ENCODE measurements at regions of chr5 and their contacts with region 1.

Region 1: DNA sequence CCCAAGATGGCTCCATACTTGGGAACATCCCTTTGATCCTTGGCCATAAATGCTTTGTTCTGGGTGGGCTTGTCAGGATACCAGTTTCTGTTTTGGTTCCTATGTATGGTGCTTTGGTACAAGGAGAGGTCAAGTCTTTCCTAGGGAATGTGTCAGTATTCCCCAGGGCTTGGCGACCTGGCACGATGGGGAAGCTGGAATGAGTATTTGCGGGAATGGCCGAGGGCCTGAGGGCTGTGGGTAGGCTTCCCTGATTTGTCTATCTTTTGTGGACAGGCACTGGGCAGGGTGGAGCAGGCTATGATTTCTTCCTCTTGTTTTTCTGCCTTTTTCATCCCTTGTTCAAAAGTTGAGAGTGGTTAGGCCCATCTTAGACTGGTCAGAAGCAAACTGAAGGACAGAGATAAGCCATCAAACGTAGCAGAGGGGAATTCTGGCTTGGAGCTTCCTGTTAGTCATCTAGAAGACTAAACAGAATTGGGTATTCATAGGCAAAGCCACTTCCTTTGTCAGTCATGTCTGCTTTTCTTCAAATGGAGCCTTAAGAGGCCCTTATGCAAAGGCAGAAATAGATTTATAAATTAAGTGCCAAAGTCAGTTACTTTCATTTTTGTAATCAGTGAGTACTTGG is 13.7 kb downstream of the DOCK2 start:
- DNase-seq: peak in 3 of 14 experiments; percentile 64 to 70 (median 68)
- ATAC-seq: peak; percentile 58
- H3K4me3 ChIP-seq: no peak overlapping the region
- H3K4me3 Mint-ChIP-seq: peak overlapping the region; percentile 72
- H3K27ac ChIP-seq: peak overlapping the region; percentile 17 to 73
- H3K27ac Mint-ChIP-seq: peak overlapping the region; percentile 81
- H3K4me1 ChIP-seq: peaks cover 86% of the 10 kb centered on the region
- H3K4me1 Mint-ChIP-seq: peaks cover 99% of the 10 kb centered on the region
- H3K27me3 ChIP-seq: no peaks in the 10 kb centered on the region
- H3K27me3 Mint-ChIP-seq: no peaks in the 10 kb centered on the region
- CTCF ChIP-seq: no peak

Region 2: DNA sequence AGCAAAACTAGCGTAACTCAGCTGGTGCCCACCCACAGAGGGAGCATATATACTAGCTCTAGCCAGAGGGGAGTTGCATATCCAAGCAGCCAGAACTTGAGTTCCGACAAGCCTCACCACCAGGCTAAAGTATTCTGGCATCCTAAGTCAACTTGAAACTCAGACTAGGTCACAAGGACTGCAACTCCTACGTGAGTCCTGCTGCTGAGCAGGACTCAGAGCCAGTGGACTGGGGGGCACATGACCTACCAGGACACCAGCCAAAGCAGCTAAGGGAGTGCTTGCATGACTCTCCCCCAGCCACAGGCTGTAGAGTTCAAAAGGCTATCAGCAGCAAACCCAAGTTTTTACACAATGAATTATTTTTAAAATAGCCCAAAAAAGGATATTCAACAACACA is 41.1 kb before region 1 on chr5:
- CTCF ChIA-PET with region 1: no interaction called
- POLR2A ChIA-PET with region 1: no interaction called
- intact Hi-C with region 1: loop called in 1 of 2 experiments (anchors 5 kb)
- DNase-seq: no peak
- ATAC-seq: no peak
- H3K4me3 ChIP-seq: no peak overlapping the region
- H3K4me3 Mint-ChIP-seq: no peak overlapping the region
- H3K27ac ChIP-seq: no peak overlapping the region
- H3K27ac Mint-ChIP-seq: no peak overlapping the region
- H3K4me1 ChIP-seq: no peaks in the 10 kb centered on the region
- H3K4me1 Mint-ChIP-seq: no peaks in the 10 kb centered on the region
- H3K27me3 ChIP-seq: no peaks in the 10 kb centered on the region
- H3K27me3 Mint-ChIP-seq: peaks cover 19% of the 10 kb centered on the region
- CTCF ChIP-seq: no peak

Region 3: GRCh38 chr5:169637085-169637548 is 13.7 kb before region 1 on chr5 and contains the start of gene DOCK2:
- CTCF ChIA-PET with region 1: no interaction called
- POLR2A ChIA-PET with region 1: interaction called, 14 read pairs
- intact Hi-C with region 1: no loop called
- DNase-seq: peak; percentile 26 to 80 (median 62)
- ATAC-seq: peak; percentile 75
- H3K4me3 ChIP-seq: peak within 1 kb of the TSS; percentile 89
- H3K4me3 Mint-ChIP-seq: peak within 1 kb of the TSS; percentile 95
- H3K27ac ChIP-seq: peak within 1 kb of the TSS; percentile 80 to 87
- H3K27ac Mint-ChIP-seq: peak within 1 kb of the TSS; percentile 97
- H3K4me1 ChIP-seq: peaks cover 47% of the 10 kb centered on the region
- H3K4me1 Mint-ChIP-seq: peaks cover 60% of the 10 kb centered on the region
- H3K27me3 ChIP-seq: no peaks in the 10 kb centered on the region
- H3K27me3 Mint-ChIP-seq: no peaks in the 10 kb centered on the region
- CTCF ChIP-seq: no peak
- total RNA-seq, gene DOCK2: 220 to 229 TPM

Measured in CD4-positive, alpha-beta T cell (primary cell).